ENCODE measurements at regions of chr17 and their contacts with region 1.

Region 1: GRCh38 chr17:68356520-68356919 is 65.2 kb downstream of the ARSG start:
- DNase-seq: peak; percentile 41 to 91 (median 56)
- ATAC-seq: peak; percentile 94
- H3K4me3 ChIP-seq: peak overlapping the region; percentile 11
- H3K4me3 Mint-ChIP-seq: peak overlapping the region; percentile 75
- H3K27ac ChIP-seq: no peak overlapping the region
- H3K27ac Mint-ChIP-seq: peak overlapping the region; percentile 68
- H3K4me1 ChIP-seq: peaks cover 79% of the 10 kb centered on the region
- H3K4me1 Mint-ChIP-seq: peaks cover 62% of the 10 kb centered on the region
- H3K27me3 ChIP-seq: no peaks in the 10 kb centered on the region
- H3K27me3 Mint-ChIP-seq: no peaks in the 10 kb centered on the region
- CTCF ChIP-seq: no peak

Region 2: DNA sequence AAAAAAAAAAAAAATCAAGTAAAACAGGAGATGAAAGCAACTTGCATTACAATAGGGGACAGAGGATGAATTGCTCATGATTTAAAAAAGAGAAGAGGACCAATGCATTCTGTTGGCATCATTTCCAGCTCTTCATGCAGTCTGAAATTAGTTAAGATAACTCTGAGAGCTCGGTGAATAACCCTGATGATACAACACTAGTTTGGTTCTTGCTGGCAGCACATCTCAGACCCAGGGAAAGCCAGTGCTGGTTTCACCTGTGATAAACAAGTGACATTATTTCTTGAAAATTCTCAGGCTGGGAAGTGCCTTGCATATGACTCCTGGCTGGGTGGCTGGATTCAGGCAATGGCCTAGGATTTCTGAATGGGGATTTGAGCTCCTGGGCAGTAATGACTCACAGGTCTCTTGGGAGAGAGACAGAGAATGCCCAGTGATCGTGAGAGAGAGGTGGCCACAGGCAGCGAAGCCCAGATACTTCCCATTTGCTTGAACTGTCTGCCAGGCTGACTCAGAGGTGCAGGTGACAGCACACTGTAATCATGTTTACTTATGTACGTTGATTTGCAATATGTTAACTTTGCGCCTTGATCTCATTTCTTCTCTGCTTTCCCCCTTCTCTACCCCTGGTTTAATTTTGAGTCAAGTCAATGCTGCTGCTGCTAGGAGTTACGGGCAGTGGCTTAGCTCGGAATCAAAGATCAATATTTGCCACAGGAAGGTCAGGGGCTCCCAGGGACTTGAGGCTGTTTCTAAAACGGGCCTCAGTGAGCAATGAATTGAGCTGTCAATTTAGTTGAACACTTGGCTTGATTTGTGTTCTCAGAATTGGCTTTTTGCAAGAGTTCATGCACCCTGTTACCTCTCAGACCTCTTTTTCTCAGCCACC is 38.2 kb before region 1 on chr17:
- CTCF ChIA-PET with region 1: no interaction called
- POLR2A ChIA-PET with region 1: no interaction called
- intact Hi-C with region 1: loop called in 1 of 2 experiments (anchors 5 kb)
- DNase-seq: peak in 2 of 14 experiments; percentile 59 to 71
- ATAC-seq: no peak
- H3K4me3 ChIP-seq: no peak overlapping the region
- H3K4me3 Mint-ChIP-seq: no peak overlapping the region
- H3K27ac ChIP-seq: no peak overlapping the region
- H3K27ac Mint-ChIP-seq: no peak overlapping the region
- H3K4me1 ChIP-seq: peaks cover 50% of the 10 kb centered on the region
- H3K4me1 Mint-ChIP-seq: peaks cover 63% of the 10 kb centered on the region
- H3K27me3 ChIP-seq: no peaks in the 10 kb centered on the region
- H3K27me3 Mint-ChIP-seq: no peaks in the 10 kb centered on the region
- CTCF ChIP-seq: no peak

Region 3: GRCh38 chr17:68346448-68346847 is 10.1 kb before region 1 on chr17:
- CTCF ChIA-PET with region 1: interaction called, 6 read pairs
- POLR2A ChIA-PET with region 1: interaction called, 36 read pairs
- intact Hi-C with region 1: no loop called
- DNase-seq: peak; percentile 32 to 86 (median 60)
- ATAC-seq: peak; percentile 66
- H3K4me3 ChIP-seq: peak overlapping the region; percentile 27
- H3K4me3 Mint-ChIP-seq: peak overlapping the region; percentile 75
- H3K27ac ChIP-seq: peak overlapping the region; percentile 69 to 75
- H3K27ac Mint-ChIP-seq: peak overlapping the region; percentile 91
- H3K4me1 ChIP-seq: peaks cover 81% of the 10 kb centered on the region
- H3K4me1 Mint-ChIP-seq: peaks cover 75% of the 10 kb centered on the region
- H3K27me3 ChIP-seq: no peaks in the 10 kb centered on the region
- H3K27me3 Mint-ChIP-seq: no peaks in the 10 kb centered on the region
- CTCF ChIP-seq: no peak

Region 4: DNA sequence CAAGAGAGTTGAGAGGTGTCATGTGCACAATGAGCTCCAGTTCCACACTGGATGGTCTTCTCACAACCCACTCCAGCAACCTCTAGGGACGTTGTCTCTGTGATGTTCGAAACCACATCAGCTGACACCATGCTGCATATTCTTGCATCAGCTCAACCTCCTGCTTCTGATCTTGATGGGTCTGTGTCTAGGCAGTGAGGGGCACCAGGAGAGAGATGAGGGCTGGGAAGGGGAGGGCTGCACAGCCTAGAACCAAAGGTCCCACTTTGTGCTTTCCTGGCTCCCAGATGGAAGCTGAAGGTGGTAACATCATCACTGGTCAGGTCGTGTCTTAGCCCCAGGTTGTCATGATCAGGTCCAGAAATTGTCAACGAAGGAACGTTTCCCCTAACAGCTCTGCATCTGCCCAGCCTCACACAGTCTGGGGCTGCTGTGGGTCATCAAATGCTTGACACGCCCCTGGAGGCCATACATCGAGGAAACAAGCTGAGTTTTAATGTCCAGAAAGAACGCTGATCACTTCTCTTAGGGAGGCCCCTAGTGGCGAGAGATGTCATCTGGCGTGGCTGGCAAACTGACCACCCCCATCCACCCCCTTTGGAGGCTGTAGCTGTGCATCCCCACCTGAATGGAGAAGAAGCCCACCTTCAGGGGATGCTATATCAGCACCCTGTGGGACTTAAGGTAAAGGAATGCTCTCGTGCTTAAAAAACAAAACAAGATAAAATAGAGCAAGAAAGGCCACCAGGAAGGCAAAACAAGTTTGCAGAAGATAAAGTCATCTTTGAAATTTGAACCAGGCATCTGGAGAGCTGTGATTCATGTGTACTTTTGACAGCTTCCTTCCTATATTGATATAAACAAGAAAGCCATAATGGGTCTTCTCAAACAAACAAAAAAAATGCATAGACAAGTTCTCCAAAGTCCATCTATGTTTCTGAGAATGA is 42.4 kb after region 1 on chr17:
- CTCF ChIA-PET with region 1: interaction called, 4 read pairs
- POLR2A ChIA-PET with region 1: no interaction called
- intact Hi-C with region 1: loop called in 1 of 2 experiments (anchors 5 kb)
- DNase-seq: peak in 4 of 14 experiments; percentile 35 to 57 (median 48)
- ATAC-seq: no peak
- H3K4me3 ChIP-seq: no peak overlapping the region
- H3K4me3 Mint-ChIP-seq: no peak overlapping the region
- H3K27ac ChIP-seq: no peak overlapping the region
- H3K27ac Mint-ChIP-seq: no peak overlapping the region
- H3K4me1 ChIP-seq: peaks cover 37% of the 10 kb centered on the region
- H3K4me1 Mint-ChIP-seq: peaks cover 36% of the 10 kb centered on the region
- H3K27me3 ChIP-seq: no peaks in the 10 kb centered on the region
- H3K27me3 Mint-ChIP-seq: no peaks in the 10 kb centered on the region
- CTCF ChIP-seq: peak; percentile 40